Motor neuron (in vitro differentiated cells): ENCODE measurements at regions of chr2 and their contacts with region 1.

Region 1: DNA sequence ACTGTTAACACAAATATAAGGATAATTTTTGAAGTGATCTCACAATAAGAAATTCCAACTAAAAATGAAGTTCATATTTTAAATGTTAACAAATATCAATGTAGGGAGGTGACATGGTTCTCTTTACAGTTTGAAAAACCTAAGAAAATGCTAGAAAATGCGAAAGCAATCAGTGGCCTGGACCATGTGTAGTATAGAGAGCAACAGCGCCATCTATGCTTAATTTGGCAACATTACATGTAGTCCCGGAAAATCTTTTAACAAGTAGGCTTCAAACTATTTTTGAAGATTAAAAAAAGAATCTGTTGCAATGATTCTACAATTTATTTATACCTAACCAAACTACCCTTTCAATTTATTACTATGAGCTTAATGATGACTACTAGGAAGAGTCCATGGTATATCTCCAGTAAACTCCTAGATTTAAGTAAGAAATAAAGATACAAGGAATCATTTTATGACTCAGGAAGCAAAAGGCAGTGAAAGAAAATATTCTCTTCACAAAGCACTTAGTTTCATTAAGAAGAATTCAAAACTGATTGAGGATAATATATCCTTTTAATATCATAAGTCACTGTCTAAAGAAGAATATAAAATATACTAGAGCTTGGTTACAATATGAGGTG is 33.3 kb downstream of the NDUFA10 start:
- ATAC-seq: peak; percentile 49 to 82 (median 58)
- H3K4me3 ChIP-seq: no peak overlapping the region
- H3K27ac ChIP-seq: no peak overlapping the region
- H3K4me1 ChIP-seq: peaks cover 0 to 15% of the 10 kb centered on the region in 2 donors

Region 2: GRCh38 chr2:239143858-239144718 is 847.7 kb before region 1 on chr2:
- in situ Hi-C with region 1: loop called in 1 of 9 experiments (anchors 25 kb)
- ATAC-seq: peak; percentile 46 to 87 (median 58)
- H3K4me3 ChIP-seq: no peak overlapping the region
- H3K27ac ChIP-seq: no peak overlapping the region
- H3K4me1 ChIP-seq: no peaks in the 10 kb centered on the region

Region 3: GRCh38 chr2:239873656-239874635 is 117.9 kb before region 1 on chr2:
- in situ Hi-C with region 1: no loop called
- ATAC-seq: no peak
- H3K4me3 ChIP-seq: no peak overlapping the region
- H3K27ac ChIP-seq: no peak overlapping the region
- H3K4me1 ChIP-seq: peaks cover 0 to 3% of the 10 kb centered on the region in 2 donors